ENCODE measurements at regions of chr7 and their contacts with region 1.

Region 1: DNA sequence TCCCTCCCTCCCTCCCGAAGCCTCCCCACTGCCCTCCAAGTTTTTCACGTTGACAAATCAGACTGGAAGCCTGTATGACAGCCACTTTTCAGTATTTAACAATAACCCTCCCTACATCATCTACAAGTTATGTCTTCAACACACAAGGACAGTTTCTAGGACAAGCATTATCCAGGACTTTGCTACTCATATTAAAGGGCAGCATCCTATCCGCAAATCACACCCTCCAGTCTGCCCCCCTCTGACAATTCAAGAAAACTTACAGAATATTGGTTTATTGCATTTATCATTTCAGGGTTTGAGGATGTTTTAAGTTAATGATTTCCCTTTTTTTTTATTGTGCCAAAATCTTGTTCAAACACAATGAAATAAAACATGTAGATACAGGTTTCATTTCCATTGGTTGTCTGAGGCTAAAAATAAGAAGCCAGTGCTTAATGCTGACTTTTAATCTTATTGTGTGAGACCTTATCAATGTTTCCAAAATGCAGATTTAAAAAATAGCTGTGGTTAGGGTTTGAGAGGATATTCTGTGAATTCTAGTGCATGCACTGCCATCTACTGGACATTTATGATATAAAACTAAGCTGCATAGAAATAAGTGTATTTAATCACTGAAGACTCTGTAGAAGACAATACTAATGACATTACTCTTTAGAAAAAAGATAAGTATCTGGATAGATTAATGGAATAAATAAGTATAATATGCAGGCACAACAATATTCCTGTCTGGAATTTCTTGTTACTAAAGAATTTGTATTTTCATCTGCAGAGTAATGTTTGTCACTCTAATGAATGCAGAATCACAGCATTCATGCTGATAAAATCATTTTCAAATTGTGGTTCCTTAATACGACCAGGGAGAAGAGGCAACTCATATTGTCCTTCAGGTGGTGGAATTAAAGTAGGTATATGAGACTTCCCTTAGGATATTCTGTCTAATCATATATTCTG is 64.1 kb downstream of the CAV1 start:
- DNase-seq: no peak
- ATAC-seq: peak; percentile 67
- H3K4me3 ChIP-seq: no peak overlapping the region
- H3K27ac ChIP-seq: peak overlapping the region; percentile 15
- H3K4me1 ChIP-seq: peaks cover 23% of the 10 kb centered on the region
- H3K27me3 ChIP-seq: no peaks in the 10 kb centered on the region
- CTCF ChIP-seq: peak; percentile 72

Region 2: DNA sequence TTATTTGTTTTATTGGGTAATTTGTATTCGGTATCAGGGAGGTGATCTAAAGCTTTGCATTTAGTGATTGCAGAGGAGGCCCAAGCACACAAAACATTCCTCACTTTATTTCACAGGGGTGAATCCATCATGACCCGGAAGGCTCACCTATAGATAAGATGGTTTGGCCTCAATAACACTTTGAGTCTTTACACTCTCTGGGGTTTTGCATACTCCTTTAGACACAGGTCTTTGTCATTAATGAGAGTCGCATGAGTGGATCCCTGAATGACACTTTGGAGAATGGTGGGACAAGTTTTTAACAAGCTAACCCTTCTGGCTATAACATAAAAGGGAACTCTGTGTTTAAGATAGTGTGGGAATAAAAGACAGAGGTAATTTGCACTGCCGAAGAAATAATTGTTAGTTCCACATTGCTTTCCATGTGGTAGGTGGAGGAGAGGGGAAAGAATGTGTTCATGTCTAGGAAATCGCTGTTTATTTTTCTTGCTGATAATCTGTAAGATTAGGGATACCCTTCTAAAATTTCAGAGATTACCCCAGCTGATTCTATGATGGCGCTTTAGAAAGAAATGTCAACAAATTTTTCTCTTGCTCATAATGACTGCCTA is 1014.1 kb before region 1 on chr7:
- intact Hi-C with region 1: no loop called
- DNase-seq: no peak
- ATAC-seq: no peak
- H3K4me3 ChIP-seq: no peak overlapping the region
- H3K27ac ChIP-seq: no peak overlapping the region
- H3K4me1 ChIP-seq: no peaks in the 10 kb centered on the region
- H3K27me3 ChIP-seq: no peaks in the 10 kb centered on the region
- CTCF ChIP-seq: no peak

Region 3: GRCh38 chr7:116258734-116259133 is 330.2 kb before region 1 on chr7:
- intact Hi-C with region 1: loop called (anchors 2 kb)
- DNase-seq: no peak
- ATAC-seq: peak; percentile 82
- H3K4me3 ChIP-seq: no peak overlapping the region
- H3K27ac ChIP-seq: no peak overlapping the region
- H3K4me1 ChIP-seq: no peaks in the 10 kb centered on the region
- H3K27me3 ChIP-seq: no peaks in the 10 kb centered on the region
- CTCF ChIP-seq: peak; percentile 77

Region 4: GRCh38 chr7:116271161-116271913 is 317.6 kb before region 1 on chr7:
- intact Hi-C with region 1: no loop called
- DNase-seq: no peak
- ATAC-seq: no peak
- H3K4me3 ChIP-seq: no peak overlapping the region
- H3K27ac ChIP-seq: peak overlapping the region; percentile 44
- H3K4me1 ChIP-seq: peaks cover 18% of the 10 kb centered on the region
- H3K27me3 ChIP-seq: no peaks in the 10 kb centered on the region
- CTCF ChIP-seq: no peak

Region 5: GRCh38 chr7:116671681-116672595 is 83.0 kb after region 1 on chr7 and contains the start of gene MET:
- intact Hi-C with region 1: no loop called
- DNase-seq: peak; percentile 91
- ATAC-seq: peak; percentile 95
- H3K4me3 ChIP-seq: peak within 1 kb of the TSS; percentile 54
- H3K27ac ChIP-seq: peak within 1 kb of the TSS; percentile 70
- H3K4me1 ChIP-seq: peaks cover 11% of the 10 kb centered on the region
- H3K27me3 ChIP-seq: peaks cover 11% of the 10 kb centered on the region
- CTCF ChIP-seq: peak; percentile 54
- total RNA-seq, gene MET: 69.6 TPM

Region 6: DNA sequence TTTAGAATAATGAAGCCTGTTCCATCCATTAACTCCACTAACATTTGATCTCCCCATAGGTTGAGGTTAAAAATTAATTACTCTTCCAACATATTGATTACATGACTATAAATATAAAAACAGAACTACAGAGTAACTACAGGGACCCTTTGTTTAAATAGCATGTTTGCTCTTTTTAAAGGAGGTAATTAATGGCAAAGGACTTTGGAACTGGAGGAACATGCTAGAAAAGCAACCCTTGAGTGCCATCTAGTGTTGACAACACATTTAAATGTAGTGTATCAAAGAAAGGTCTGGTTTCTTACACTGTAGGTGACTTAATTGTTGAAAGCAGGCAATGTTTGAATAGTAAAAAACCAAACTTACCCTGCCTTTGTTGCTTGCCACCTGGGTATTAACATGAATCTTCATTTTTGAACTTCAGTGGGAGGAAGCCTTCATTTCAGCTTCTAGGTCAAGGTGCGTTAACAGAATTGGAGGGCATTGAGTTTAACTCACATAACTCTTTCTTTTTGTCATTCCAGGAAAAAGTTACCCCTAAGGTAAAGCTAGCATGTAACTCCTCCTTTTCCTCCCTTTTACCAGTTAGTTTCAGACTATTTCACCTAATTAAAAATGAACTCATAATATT is 220.8 kb after region 1 on chr7:
- intact Hi-C with region 1: loop called (anchors 5 kb)
- DNase-seq: no peak
- ATAC-seq: peak; percentile 89
- H3K4me3 ChIP-seq: no peak overlapping the region
- H3K27ac ChIP-seq: no peak overlapping the region
- H3K4me1 ChIP-seq: peaks cover 13% of the 10 kb centered on the region
- H3K27me3 ChIP-seq: no peaks in the 10 kb centered on the region
- CTCF ChIP-seq: peak; percentile 62